ENCODE measurements at regions of chr1 and their contacts with region 1.

Region 1: DNA sequence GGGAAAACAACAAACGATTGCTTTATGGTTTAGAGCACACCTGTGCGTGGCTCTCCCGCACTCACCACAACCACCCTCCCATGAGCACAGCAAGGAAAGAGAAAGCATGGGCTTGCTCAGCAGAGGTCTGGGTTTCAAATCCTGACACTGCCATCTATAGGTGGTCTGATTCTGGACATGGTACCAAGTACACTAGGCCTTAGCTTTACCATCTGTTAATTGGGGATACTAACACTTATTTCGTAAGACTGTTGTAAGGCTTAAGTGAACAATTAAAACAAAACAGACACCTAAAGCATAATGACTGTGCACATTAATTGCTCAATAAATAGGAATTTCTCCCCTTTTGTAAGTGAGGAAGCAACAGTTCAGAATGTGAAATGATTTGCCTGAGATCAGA is 50.1 kb downstream of the HIVEP3 start:
- DNase-seq: peak; percentile 71
- ATAC-seq: peak; percentile 80
- H3K4me3 ChIP-seq: peak overlapping the region in 1 of 5 experiments; percentile 32
- H3K4me3 Mint-ChIP-seq: peak overlapping the region; percentile 29
- H3K27ac ChIP-seq: no peak overlapping the region
- H3K27ac Mint-ChIP-seq: no peak overlapping the region
- H3K4me1 ChIP-seq: peaks cover 7 to 10% of the 10 kb centered on the region in 2 donors
- H3K4me1 Mint-ChIP-seq: peaks cover 17% of the 10 kb centered on the region
- H3K27me3 ChIP-seq: no peaks in the 10 kb centered on the region
- H3K27me3 Mint-ChIP-seq: no peaks in the 10 kb centered on the region
- CTCF ChIP-seq: peak; percentile 42

Region 2: DNA sequence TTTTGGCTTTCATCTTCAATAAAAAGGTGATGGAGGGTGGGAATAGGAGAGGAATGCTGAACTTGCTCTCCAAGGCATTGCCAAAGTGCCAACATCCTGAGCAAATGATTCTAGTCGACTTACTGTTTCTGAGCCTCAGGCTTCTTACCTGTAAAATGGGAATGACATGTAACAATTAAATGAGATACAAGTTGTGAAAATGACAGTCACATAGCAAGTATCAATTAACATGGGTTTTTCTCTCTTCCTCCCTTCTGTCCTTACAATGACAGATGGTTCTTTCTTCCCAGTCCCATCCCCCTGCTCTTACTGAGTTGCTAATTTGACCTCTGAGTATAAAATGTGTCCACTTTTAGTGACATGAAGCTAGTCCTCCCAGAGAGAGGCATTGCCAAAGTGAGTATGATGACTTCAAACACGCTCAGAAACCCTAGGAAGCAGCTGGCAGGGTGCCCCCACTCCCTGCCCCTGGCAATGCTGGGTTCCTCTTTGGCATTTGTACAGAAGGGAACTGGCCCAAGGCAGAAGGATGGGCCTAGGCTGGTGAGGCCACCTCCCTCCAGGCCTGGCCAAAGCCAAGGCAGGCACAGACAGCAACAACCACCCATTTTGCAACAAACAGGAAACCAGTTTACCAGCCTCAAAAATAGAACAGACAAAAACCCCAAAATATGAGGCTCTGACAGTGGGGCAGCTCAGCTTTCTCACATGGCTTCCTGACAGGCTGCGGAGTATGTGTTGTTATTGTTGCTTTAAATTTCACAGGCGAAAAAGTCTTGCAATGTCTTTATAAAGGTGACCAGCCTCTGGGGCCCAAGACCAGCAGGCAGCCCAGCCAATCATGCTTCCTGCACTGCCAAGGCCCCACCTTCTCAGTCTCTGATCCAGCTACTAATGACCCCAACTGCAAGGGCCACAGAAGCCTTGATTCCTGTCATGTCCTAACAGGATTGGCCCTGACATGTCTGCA is 65.8 kb before region 1 on chr1:
- CTCF ChIA-PET with region 1: no interaction called
- POLR2A ChIA-PET with region 1: no interaction called
- intact Hi-C with region 1: loop called (anchors 5 kb)
- DNase-seq: peak; percentile 63
- ATAC-seq: peak; percentile 79
- H3K4me3 ChIP-seq: peak overlapping the region in 1 of 5 experiments; percentile 16
- H3K4me3 Mint-ChIP-seq: peak overlapping the region; percentile 71
- H3K27ac ChIP-seq: peak overlapping the region; percentile 56 to 70
- H3K27ac Mint-ChIP-seq: peak overlapping the region; percentile 84
- H3K4me1 ChIP-seq: peaks cover 69 to 82% of the 10 kb centered on the region in 2 donors
- H3K4me1 Mint-ChIP-seq: peaks cover 74% of the 10 kb centered on the region
- H3K27me3 ChIP-seq: no peaks in the 10 kb centered on the region
- H3K27me3 Mint-ChIP-seq: no peaks in the 10 kb centered on the region
- CTCF ChIP-seq: no peak

Region 3: GRCh38 chr1:41842993-41843755 is 25.4 kb before region 1 on chr1:
- CTCF ChIA-PET with region 1: no interaction called
- POLR2A ChIA-PET with region 1: no interaction called
- intact Hi-C with region 1: no loop called
- DNase-seq: no peak
- ATAC-seq: no peak
- H3K4me3 ChIP-seq: no peak overlapping the region
- H3K4me3 Mint-ChIP-seq: no peak overlapping the region
- H3K27ac ChIP-seq: no peak overlapping the region
- H3K27ac Mint-ChIP-seq: no peak overlapping the region
- H3K4me1 ChIP-seq: no peaks in the 10 kb centered on the region
- H3K4me1 Mint-ChIP-seq: peaks cover 4% of the 10 kb centered on the region
- H3K27me3 ChIP-seq: no peaks in the 10 kb centered on the region
- H3K27me3 Mint-ChIP-seq: peaks cover under 1% of the 10 kb centered on the region
- CTCF ChIP-seq: no peak

Region 4: DNA sequence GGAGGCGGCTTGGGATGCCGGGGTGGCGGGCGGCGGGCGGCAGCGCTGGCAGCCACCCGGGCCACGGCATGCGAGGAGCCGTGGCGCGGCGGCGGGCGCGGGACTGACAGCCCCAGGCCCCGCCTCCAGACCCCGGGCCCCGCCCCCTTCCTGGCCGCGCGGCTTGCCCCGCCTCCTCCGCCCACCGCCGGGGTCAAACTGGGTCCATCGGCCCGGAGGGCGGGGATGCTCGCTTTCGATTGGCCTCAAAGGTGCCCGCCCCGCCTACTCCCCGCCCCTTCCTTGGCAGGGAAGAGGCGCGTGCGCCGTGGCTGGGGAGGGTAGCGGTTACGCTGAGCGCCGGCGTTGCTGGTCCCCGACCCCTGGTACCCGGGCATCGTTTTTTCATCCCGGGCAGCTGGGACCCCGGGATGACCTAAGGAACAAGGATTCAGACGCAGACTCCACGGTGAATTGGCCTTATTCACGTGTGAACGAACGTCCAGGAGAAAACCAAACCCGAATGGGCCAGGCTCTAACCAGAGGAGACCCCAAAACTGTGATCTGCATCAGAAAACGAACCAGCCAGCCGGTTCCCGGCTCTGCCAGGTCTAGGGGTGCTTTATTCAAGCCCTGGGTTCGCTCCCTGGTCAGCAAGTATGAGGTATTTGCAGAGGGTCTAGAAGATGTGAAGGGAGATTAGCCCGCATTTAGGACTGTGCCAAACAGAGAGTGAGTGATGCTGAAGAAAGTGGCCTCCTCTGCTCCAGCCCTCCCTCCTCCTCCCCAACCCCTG is 167.4 kb after region 1 on chr1:
- CTCF ChIA-PET with region 1: no interaction called
- POLR2A ChIA-PET with region 1: no interaction called
- intact Hi-C with region 1: no loop called
- DNase-seq: peak; percentile 95
- ATAC-seq: peak; percentile 94
- H3K4me3 ChIP-seq: peak overlapping the region; percentile 13 to 93 (median 83)
- H3K4me3 Mint-ChIP-seq: peak overlapping the region; percentile 72
- H3K27ac ChIP-seq: peak overlapping the region in 1 of 2 donors; percentile 34
- H3K27ac Mint-ChIP-seq: peak overlapping the region; percentile 67
- H3K4me1 ChIP-seq: peaks cover 13 to 15% of the 10 kb centered on the region in 2 donors
- H3K4me1 Mint-ChIP-seq: peaks cover 12% of the 10 kb centered on the region
- H3K27me3 ChIP-seq: peaks cover 0 to 6% (median 0%) of the 10 kb centered on the region in 4 experiments
- H3K27me3 Mint-ChIP-seq: peaks cover 13% of the 10 kb centered on the region
- CTCF ChIP-seq: no peak

Measured in B cell (primary cell).